ENCODE measurements at regions of chr17 and their contacts with region 1.

Region 1: DNA sequence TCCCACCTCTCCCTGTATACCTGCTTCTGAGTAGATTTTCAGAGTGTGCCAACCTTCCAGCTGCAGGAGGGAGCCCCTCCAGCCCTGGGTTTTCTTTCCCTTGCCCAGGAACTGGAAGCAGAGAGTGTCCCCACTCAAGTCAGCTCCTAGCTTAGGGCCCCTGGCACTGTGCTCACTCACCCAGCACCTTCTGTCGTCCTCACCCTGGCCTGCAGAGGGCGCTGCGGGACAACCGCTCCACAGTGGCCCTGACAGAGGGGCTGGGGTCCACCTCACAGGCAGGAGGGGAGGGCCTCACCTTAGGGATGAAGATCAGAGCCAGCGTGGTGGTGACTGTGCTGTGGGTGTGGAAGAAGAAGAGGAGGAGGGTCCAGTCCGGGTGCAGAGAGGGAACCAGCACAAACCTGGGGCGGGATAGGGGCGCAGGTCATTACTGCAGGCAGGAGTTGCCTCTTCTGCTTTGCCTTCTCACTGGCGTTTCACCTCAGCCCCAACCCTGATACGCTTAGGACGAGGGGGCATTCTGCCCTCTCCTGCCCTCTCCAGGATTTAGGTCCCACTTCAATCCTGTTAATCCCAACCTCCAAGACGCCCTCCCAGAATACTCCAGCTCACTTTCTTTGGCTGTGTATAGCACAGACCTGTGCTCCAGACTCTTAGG is 10.0 kb downstream of the GPR179 start:
- DNase-seq: peak; percentile 33
- H3K4me3 ChIP-seq: no peak overlapping the region
- H3K27ac ChIP-seq: no peak overlapping the region
- H3K4me1 ChIP-seq: no peaks in the 10 kb centered on the region
- H3K27me3 ChIP-seq: no peaks in the 10 kb centered on the region
- CTCF ChIP-seq: peak; percentile 73 to 75
- POLR2A ChIP-seq: no peak

Region 2: DNA sequence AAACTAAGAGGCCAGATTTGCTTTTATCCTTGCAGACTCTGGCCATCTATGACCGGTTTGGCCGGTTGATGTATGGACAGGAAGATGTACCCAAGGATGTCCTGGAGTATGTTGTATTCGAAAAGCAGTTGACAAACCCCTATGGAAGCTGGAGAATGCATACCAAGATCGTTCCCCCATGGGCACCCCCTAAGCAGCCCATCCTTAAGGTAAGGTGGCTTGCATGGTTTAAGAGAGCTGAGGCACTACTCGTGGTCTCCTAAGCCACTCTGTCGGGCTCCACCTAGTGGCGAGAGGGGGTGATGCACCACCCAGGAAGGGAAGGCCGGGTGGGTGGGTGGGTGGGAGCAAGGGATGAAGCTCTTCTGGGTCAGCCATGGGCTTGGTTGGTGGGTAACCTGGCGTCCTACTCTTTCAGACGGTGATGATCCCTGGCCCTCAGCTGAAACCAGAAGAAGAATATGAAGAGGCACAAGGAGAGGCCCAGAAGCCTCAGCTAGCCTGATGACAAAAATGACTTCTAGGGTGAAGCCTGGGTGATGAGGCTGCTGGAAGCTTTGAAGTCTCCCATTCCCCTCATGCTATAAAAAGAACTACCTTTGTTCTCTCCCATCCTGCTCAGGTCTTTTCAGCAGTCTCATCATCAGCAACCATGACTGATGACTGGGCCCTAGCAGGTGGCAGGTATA is 11.5 kb before region 1 on chr17:
- CTCF ChIA-PET with region 1: interaction called, 28 read pairs
- POLR2A ChIA-PET with region 1: no interaction called
- dilution Hi-C with region 1: no loop called
- intact Hi-C with region 1: no loop called
- DNase-seq: no peak
- H3K4me3 ChIP-seq: no peak overlapping the region
- H3K27ac ChIP-seq: no peak overlapping the region
- H3K4me1 ChIP-seq: peaks cover 5% of the 10 kb centered on the region
- H3K27me3 ChIP-seq: no peaks in the 10 kb centered on the region
- CTCF ChIP-seq: peak; percentile 15 to 70
- POLR2A ChIP-seq: no peak

Region 3: DNA sequence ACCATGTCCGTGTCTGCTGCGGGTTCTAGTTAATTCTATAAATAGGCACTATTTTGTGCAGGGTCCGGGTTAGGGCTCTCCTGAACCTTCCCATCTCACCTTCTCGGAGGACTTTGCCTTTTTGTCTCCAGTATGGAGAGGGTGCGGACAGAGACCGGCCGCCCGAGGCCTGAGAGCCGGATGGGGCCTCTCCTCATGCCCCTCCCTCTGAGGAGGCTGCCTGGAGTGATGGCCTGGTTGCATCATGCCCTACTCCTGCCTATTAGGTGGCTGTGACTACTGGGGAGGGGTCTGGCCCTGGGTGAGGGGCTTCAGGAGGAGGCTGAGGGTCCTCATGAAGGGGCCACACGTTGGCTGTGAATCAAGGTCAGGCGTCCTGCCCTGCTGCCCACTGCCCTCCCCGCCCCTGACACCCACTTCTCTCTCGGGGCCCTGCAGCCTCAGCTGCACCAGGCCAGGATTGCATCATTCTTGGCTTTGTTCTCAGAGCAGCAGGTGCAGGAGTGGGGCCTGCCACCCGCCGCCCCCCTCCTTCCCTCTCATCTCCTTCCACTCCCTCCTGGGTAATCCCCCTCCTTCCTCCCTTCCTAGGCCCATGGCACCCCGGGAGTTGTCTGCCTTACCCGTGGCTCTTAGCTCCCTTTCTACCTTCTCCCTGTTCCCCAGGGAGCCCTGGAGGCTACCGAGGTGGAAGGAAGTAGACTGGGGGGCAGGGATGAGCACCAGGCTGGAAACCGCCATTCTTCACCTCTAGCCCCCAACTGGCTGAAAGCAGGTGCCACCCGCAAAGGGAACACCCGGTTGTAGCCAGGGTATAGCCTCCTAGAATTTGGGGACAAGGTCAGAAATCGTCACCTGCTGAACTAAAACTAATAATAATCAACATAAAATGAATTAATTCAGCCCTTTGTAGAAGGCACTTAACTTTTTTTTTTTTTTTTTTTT is 81.8 kb after region 1 on chr17:
- CTCF ChIA-PET with region 1: interaction called, 42 read pairs
- POLR2A ChIA-PET with region 1: no interaction called
- dilution Hi-C with region 1: no loop called
- intact Hi-C with region 1: no loop called
- DNase-seq: no peak
- H3K4me3 ChIP-seq: no peak overlapping the region
- H3K27ac ChIP-seq: no peak overlapping the region
- H3K4me1 ChIP-seq: no peaks in the 10 kb centered on the region
- H3K27me3 ChIP-seq: peaks cover 20 to 22% of the 10 kb centered on the region in 2 experiments
- CTCF ChIP-seq: no peak
- POLR2A ChIP-seq: no peak

Measured in endothelial cell of umbilical vein (primary cell).